Heart right ventricle (tissue), 16 donors: ENCODE measurements at regions of chr1 and their contacts with region 1.

Region 1: DNA sequence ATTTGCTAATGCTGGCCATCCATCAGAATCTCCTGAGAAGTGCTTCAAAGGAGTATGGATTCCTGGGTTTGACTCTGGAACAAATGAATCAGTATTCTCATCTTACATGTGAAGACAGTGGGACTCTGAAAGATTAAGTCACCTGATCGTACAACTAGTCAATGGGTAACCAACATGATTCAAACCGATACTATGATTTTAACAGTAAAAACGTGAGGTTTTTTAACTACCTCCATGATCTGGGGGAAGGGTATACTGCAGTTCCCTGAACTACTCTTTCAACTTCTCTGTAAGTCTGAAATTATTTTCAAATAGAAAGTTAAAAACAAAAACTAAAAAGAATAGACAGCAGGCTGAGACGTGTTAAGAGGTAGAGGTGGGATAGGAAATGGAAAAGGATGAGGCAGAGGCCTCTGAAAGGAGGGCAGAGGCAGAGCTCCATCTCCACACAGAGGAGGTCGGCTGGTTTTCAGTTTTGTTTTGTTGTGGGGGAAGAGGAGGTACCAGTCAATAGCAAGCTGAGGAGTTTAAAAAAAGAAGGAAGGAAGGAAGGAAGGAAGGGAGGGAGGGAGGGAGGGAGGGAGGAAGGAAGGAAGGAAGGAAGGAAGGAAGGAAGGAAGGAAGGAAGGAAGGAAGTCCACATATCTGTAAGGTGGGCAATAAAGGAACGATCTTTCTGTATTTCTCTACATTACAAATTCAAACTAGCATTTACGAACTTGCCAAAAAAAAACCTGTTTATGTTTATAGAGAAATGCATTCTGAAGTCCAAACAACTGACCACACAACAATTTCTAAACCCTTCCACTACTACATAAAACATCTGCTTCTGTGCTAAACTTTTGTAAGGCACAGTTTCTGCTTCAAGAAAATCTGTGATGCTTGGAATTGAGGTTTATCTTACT is 213.1 kb downstream of the RERE start:
- DNase-seq: no peak
- ATAC-seq: no peak
- H3K4me3 ChIP-seq: no peak overlapping the region
- H3K27ac ChIP-seq: peak overlapping the region in 3 of 10 donors; percentile 17 to 57 (median 36)
- H3K4me1 ChIP-seq: peaks cover 0 to 34% (median 20%) of the 10 kb centered on the region in 9 donors
- H3K27me3 ChIP-seq: no peaks in the 10 kb centered on the region
- CTCF ChIP-seq: no peak

Region 2: GRCh38 chr1:8643542-8644536 is 39.5 kb after region 1 on chr1:
- intact Hi-C with region 1: loop called in 1 of 10 experiments (anchors 5 kb)
- DNase-seq: no peak
- ATAC-seq: no peak
- H3K4me3 ChIP-seq: no peak overlapping the region
- H3K27ac ChIP-seq: peak overlapping the region in 1 of 10 donors; percentile 12
- H3K4me1 ChIP-seq: peaks cover 0 to 73% (median 48%) of the 10 kb centered on the region in 9 donors
- H3K27me3 ChIP-seq: no peaks in the 10 kb centered on the region
- CTCF ChIP-seq: no peak